Mammary epithelial cell (primary cell): ENCODE measurements at regions of chr1 and their contacts with region 1.

Region 1: DNA sequence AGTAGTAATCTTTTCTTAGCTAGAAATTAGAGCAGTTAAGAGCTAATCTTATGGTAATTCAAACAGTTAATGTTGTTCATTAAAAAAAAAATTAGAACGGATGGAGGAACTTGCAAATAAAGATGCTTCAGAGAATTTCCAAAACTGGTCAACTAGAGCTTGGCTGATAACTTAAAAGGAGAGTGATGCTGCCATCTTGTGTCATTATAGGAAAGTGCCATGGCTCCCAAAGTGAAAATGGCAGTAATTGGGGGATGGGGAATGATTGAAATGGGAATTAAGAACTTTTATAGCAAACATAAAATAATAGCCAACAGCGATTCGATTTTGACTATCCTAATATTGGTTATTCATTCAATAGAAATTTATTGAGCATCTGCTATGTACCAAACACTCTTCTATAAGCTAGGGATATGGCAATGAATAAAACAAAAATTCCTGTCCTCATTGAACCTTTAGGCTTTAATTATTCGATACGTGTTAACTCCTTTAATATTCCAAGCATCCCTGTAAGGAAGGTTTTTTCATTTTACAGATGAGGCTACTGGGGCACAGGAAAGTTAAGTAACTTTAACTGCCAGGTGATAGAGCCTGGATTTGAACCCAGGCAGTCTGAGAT is 5.7 kb upstream of the PLPP3 start:
- DNase-seq: peak; percentile 25
- H3K4me3 ChIP-seq: no peak overlapping the region
- H3K27ac ChIP-seq: no peak overlapping the region
- H3K4me1 ChIP-seq: no peaks in the 10 kb centered on the region
- H3K27me3 ChIP-seq: no peaks in the 10 kb centered on the region
- CTCF ChIP-seq: peak; percentile 77 to 82

Region 2: GRCh38 chr1:55284852-55285251 is 1300.2 kb before region 1 on chr1:
- CTCF ChIA-PET with region 1: interaction called, 3 read pairs
- dilution Hi-C with region 1: no loop called
- in situ Hi-C with region 1: loop called (anchors 10 kb)
- intact Hi-C with region 1: loop called (anchors 1 kb)
- DNase-seq: peak; percentile 28
- H3K4me3 ChIP-seq: no peak overlapping the region
- H3K27ac ChIP-seq: no peak overlapping the region
- H3K4me1 ChIP-seq: peaks cover 11% of the 10 kb centered on the region
- H3K27me3 ChIP-seq: no peaks in the 10 kb centered on the region
- CTCF ChIP-seq: peak; percentile 57 to 62

Region 3: GRCh38 chr1:55375617-55376258 is 1209.3 kb before region 1 on chr1:
- CTCF ChIA-PET with region 1: no interaction called
- dilution Hi-C with region 1: no loop called
- in situ Hi-C with region 1: no loop called
- intact Hi-C with region 1: loop called (anchors 2 kb)
- DNase-seq: peak; percentile 4
- H3K4me3 ChIP-seq: no peak overlapping the region
- H3K27ac ChIP-seq: no peak overlapping the region
- H3K4me1 ChIP-seq: no peaks in the 10 kb centered on the region
- H3K27me3 ChIP-seq: no peaks in the 10 kb centered on the region
- CTCF ChIP-seq: peak; percentile 91 to 92

Region 4: DNA sequence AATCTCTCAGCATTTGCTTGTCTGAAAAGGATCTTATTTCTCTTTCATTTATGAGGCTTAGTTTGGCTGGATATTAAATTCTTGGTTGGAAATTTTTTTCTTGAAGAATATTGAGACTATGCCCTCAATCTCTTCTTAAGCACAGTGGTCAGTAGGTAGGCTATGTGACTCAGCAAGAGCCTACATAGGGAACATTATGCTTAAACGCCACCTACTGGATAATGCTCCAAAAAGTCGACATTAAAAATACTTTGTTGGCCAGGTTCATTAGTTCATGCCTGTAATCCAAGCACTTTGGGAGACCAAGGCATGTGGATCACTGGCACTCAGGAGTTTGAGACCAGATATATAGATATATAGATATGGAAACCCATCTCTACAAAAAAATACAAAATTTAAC is 691.9 kb before region 1 on chr1:
- CTCF ChIA-PET with region 1: no interaction called
- dilution Hi-C with region 1: no loop called
- in situ Hi-C with region 1: no loop called
- intact Hi-C with region 1: loop called (anchors 10 kb)
- DNase-seq: peak; percentile 55
- H3K4me3 ChIP-seq: no peak overlapping the region
- H3K27ac ChIP-seq: no peak overlapping the region
- H3K4me1 ChIP-seq: no peaks in the 10 kb centered on the region
- H3K27me3 ChIP-seq: no peaks in the 10 kb centered on the region
- CTCF ChIP-seq: peak; percentile 43 to 59

Region 5: GRCh38 chr1:56709269-56709880 is 124.4 kb after region 1 on chr1:
- CTCF ChIA-PET with region 1: no interaction called
- dilution Hi-C with region 1: no loop called
- in situ Hi-C with region 1: no loop called
- intact Hi-C with region 1: loop called (anchors 5 kb)
- DNase-seq: peak; percentile 38
- H3K4me3 ChIP-seq: no peak overlapping the region
- H3K27ac ChIP-seq: no peak overlapping the region
- H3K4me1 ChIP-seq: peaks cover 3% of the 10 kb centered on the region
- H3K27me3 ChIP-seq: no peaks in the 10 kb centered on the region
- CTCF ChIP-seq: peak; percentile 52 to 54

Region 6: DNA sequence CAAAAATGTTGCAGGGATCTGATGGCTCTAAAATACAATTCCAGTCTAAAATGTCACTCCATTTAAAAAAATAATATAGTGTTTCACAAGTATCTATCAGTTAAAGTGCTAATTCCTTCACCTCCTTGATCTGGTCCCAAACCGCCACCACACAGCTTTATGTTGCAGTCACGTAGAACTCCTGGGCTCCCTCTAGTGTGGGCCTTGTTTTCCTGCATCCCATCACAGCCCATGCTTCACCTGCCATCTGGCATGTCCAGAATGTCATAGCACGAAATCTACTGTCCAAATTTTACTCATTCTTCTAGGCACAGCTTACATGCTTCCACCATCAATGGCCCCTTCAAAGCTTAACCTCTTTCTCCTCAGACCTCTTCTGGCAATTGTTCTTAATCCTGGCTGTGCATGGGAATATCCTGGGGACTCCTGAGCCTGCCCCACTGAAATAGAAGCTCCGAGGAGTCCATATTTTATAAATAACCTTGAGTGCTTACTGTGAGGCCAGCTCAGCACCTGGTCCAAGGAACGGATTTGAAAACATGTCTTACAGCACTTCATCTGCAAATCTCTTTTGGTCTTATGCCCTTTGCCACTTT is 218.6 kb after region 1 on chr1:
- CTCF ChIA-PET with region 1: no interaction called
- dilution Hi-C with region 1: no loop called
- in situ Hi-C with region 1: no loop called
- intact Hi-C with region 1: no loop called
- DNase-seq: peak; percentile 19
- H3K4me3 ChIP-seq: no peak overlapping the region
- H3K27ac ChIP-seq: no peak overlapping the region
- H3K4me1 ChIP-seq: no peaks in the 10 kb centered on the region
- H3K27me3 ChIP-seq: no peaks in the 10 kb centered on the region
- CTCF ChIP-seq: peak; percentile 59 to 73

Region 7: GRCh38 chr1:56958526-56958925 is 373.5 kb after region 1 on chr1:
- CTCF ChIA-PET with region 1: no interaction called
- dilution Hi-C with region 1: no loop called
- in situ Hi-C with region 1: no loop called
- intact Hi-C with region 1: no loop called
- DNase-seq: no peak
- H3K4me3 ChIP-seq: no peak overlapping the region
- H3K27ac ChIP-seq: no peak overlapping the region
- H3K4me1 ChIP-seq: no peaks in the 10 kb centered on the region
- H3K27me3 ChIP-seq: no peaks in the 10 kb centered on the region
- CTCF ChIP-seq: no peak

Region 8: GRCh38 chr1:56968878-56969495 is 384.0 kb after region 1 on chr1:
- CTCF ChIA-PET with region 1: no interaction called
- dilution Hi-C with region 1: no loop called
- in situ Hi-C with region 1: no loop called
- intact Hi-C with region 1: no loop called
- DNase-seq: peak; percentile 27
- H3K4me3 ChIP-seq: no peak overlapping the region
- H3K27ac ChIP-seq: no peak overlapping the region
- H3K4me1 ChIP-seq: peaks cover under 1% of the 10 kb centered on the region
- H3K27me3 ChIP-seq: no peaks in the 10 kb centered on the region
- CTCF ChIP-seq: no peak